PC-3 (cell line): ENCODE measurements at regions of chr1 and their contacts with region 1.

Region 1: DNA sequence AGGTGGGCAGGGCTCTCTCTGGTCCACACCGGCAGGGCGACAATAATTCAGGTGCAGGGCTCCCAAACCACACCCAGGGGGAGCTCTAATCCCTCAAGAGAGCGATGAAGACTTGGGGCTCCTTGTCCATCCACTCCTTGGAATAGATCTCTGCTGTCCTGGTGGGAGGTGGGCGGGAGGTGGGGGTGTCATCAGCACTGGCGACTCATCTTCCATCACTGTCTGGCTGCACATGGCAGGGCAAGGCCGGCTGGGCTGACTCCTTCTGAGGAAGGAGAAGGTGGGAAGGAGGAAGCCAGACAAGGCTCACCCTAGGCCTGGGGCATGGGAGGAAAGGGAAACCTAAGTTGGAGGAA is 29.3 kb downstream of the TNNT2 start:
- DNase-seq: peak; percentile 98
- ATAC-seq: peak; percentile 79
- H3K4me3 ChIP-seq: no peak overlapping the region
- H3K27ac ChIP-seq: no peak overlapping the region
- H3K4me1 ChIP-seq: peaks cover 24% of the 10 kb centered on the region
- H3K27me3 ChIP-seq: no peaks in the 10 kb centered on the region
- CTCF ChIP-seq: peak; percentile 100

Region 2: GRCh38 chr1:201254625-201255506 is 93.3 kb before region 1 on chr1:
- CTCF ChIA-PET with region 1: interaction called, 13 read pairs
- POLR2A ChIA-PET with region 1: no interaction called
- intact Hi-C with region 1: loop called (anchors 1 kb)
- DNase-seq: peak; percentile 98
- ATAC-seq: peak; percentile 87
- H3K4me3 ChIP-seq: no peak overlapping the region
- H3K27ac ChIP-seq: no peak overlapping the region
- H3K4me1 ChIP-seq: no peaks in the 10 kb centered on the region
- H3K27me3 ChIP-seq: no peaks in the 10 kb centered on the region
- CTCF ChIP-seq: peak; percentile 100

Region 3: GRCh38 chr1:201268604-201269151 is 79.5 kb before region 1 on chr1:
- CTCF ChIA-PET with region 1: interaction called, 14 read pairs
- POLR2A ChIA-PET with region 1: no interaction called
- intact Hi-C with region 1: loop called (anchors 1 kb)
- DNase-seq: peak; percentile 89
- ATAC-seq: peak; percentile 34
- H3K4me3 ChIP-seq: no peak overlapping the region
- H3K27ac ChIP-seq: peak overlapping the region; percentile 83
- H3K4me1 ChIP-seq: peaks cover 44% of the 10 kb centered on the region
- H3K27me3 ChIP-seq: no peaks in the 10 kb centered on the region
- CTCF ChIP-seq: no peak

Region 4: DNA sequence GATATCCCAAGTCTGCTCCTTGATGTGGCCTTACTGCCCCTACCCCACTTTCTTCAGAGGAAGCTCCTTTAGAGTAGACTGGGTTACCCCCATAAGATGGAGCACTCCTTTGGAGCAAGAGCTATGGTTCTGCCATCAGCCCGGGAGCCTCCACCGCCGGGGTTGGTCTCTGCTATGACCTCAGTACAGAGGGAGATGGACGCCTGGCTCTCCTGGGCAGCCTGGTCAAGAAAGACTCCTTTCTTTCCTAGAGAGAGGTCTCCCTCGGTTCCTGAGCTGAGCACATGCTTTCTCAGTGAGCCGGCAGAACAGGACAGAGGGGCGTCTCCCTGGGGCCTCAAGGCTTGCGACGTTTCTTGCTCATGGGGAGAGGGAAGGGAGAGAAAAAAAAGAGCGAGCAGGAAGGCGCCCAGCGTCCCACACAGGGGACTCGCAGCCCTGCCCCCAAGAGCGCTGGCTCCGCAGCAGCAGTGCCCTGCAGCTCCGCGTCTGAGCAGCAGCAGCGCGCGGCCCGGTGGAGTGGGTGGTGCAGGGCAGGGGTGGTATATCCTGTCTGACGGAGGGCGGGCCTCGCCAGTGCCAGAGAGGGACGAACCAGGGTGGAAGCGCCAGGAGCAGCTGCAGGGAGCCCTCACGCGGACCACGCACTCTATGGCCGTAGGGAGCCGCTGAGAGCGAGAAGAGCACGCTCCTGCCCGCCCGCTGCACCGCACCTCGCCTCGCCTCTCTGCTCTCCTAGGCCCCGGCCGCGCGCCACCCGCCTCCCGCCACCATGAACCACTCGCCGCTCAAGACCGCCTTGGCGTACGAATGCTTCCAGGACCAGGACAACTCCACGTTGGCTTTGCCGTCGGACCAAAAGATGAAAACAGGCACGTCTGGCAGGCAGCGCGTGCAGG is 65.0 kb before region 1 on chr1 and contains the start of gene PKP1:
- CTCF ChIA-PET with region 1: interaction called, 13 read pairs
- POLR2A ChIA-PET with region 1: no interaction called
- intact Hi-C with region 1: loop called (anchors 1 kb)
- DNase-seq: peak; percentile 100
- ATAC-seq: peak; percentile 84
- H3K4me3 ChIP-seq: peak within 1 kb of the TSS; percentile 79
- H3K27ac ChIP-seq: peak within 1 kb of the TSS; percentile 74
- H3K4me1 ChIP-seq: peaks cover 60% of the 10 kb centered on the region
- H3K27me3 ChIP-seq: no peaks in the 10 kb centered on the region
- CTCF ChIP-seq: 0 out of 2 replicates have a peak, but pooled peaks have one; percentile 27
- total RNA-seq, gene PKP1: 211 and 259 TPM in 2 replicates

Region 5: DNA sequence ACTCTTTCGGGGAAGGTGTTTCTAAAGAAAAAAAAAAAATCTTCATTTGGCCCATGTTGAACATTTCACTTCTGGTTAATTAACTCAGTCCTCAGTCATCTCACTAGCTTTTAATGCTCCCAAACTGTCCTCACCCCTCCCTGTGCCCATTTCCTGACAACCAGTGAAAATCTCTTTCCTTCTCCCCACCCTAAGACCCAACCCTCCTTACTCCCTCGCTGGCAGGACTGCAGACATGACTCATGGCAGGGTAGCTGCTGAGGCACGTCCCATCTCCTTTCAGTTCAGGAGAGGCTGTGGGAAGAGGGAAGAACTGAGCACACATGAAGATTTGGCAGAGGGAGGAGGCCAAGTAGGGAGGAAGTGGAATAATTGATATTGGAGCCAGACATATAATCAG is 52.3 kb before region 1 on chr1:
- CTCF ChIA-PET with region 1: interaction called, 4 read pairs
- POLR2A ChIA-PET with region 1: no interaction called
- intact Hi-C with region 1: loop called (anchors 1 kb)
- DNase-seq: peak; percentile 100
- ATAC-seq: peak; percentile 90
- H3K4me3 ChIP-seq: peak overlapping the region; percentile 3; the same call in 1 of the 2 replicates
- H3K27ac ChIP-seq: peak overlapping the region; percentile 67
- H3K4me1 ChIP-seq: peaks cover 49% of the 10 kb centered on the region
- H3K27me3 ChIP-seq: no peaks in the 10 kb centered on the region
- CTCF ChIP-seq: no peak

Region 6: GRCh38 chr1:201408176-201408833 is 60.1 kb after region 1 on chr1:
- CTCF ChIA-PET with region 1: interaction called, 5 read pairs
- POLR2A ChIA-PET with region 1: no interaction called
- intact Hi-C with region 1: loop called (anchors 2 kb)
- DNase-seq: peak; percentile 99
- ATAC-seq: peak; percentile 89
- H3K4me3 ChIP-seq: no peak overlapping the region
- H3K27ac ChIP-seq: no peak overlapping the region
- H3K4me1 ChIP-seq: peaks cover 10% of the 10 kb centered on the region; the same call in 1 of the 2 replicates
- H3K27me3 ChIP-seq: no peaks in the 10 kb centered on the region
- CTCF ChIP-seq: peak; percentile 100

Region 7: GRCh38 chr1:201648066-201648906 is 300.1 kb after region 1 on chr1:
- CTCF ChIA-PET with region 1: no interaction called
- POLR2A ChIA-PET with region 1: no interaction called
- intact Hi-C with region 1: no loop called
- DNase-seq: peak; percentile 27
- ATAC-seq: peak; percentile 65
- H3K4me3 ChIP-seq: peak overlapping the region; percentile 71
- H3K27ac ChIP-seq: no peak overlapping the region
- H3K4me1 ChIP-seq: peaks cover 17% of the 10 kb centered on the region; the same call in 1 of the 2 replicates
- H3K27me3 ChIP-seq: no peaks in the 10 kb centered on the region
- CTCF ChIP-seq: no peak